Right ventricle myocardium inferior (tissue), 1 donor: ENCODE measurements at regions of chr18 and their contacts with region 1.

Region 1: DNA sequence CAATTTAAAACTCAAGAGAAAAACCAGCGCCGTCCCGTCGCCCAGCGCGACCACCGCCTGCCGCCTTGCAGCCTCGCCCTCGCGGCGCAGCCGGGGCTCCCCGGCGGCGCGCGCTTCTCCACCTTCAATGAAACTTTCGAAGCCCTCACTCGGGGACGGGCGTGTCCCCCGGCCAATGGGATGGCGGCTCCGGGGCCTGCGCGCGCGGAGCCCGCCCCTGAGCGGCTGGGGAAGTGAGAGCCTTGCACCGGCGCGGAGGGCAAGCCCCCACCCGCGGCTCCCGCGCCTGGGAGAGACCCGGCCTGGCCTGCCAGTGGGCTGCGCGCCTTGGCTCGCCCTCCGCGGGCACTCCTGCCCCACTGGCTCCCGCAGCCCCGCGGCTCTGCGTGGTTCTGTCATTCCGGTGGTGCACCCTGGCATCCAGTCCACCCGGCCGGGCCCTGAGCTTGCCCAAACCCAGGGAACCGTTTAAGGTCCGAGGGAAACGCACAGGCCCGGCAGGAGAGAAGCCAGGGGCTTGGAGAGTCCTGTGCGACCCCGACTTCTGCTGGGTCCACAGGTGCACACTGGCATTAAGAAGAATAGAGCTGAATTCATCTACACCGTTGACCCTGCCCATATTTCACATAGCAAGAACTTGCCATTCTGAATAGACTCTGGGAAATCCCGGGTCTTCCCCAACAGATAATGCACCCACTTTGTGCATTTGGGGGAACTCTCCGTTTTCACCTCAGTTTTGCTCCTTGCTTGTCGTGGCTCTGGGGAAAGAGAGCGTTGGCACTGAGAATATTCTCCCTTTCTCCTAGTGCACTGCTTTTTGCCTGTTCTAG is at the start of gene PIEZO2:
- DNase-seq: peak; percentile 72
- ATAC-seq: peak; percentile 39
- total RNA-seq, gene PIEZO2: 0.11 TPM

Region 2: DNA sequence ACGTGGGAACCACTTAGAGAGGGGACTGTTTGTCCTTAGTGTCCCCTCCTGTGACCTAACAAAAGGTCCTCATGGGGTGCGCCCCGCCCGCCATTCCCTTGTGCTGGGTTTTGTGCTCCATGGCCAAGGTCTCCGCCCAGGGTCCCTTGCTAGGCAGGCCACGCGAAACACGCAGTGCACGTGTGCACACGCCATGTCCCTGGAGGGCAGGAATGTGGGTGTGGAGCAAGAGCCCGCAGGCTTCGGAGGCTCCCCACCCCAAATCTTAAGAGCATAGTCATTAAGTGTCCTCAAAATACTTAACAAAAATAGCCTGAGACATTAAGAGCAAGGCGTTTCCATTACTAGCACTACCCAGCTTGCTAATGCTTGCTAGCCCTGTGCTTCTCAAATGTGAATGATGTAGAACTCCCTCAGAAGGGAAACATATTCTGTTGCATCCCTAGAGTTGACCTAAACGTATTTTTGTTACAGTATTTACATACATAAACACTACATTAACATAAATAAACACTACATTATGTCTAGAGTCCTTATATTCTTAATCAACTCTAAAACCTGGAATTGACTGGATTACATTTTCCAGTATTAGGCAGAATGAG is 812.8 kb before region 1 on chr18:
- intact Hi-C with region 1: no loop called
- DNase-seq: no peak
- ATAC-seq: no peak

Region 3: GRCh38 chr18:10560450-10561045 is 589.1 kb before region 1 on chr18:
- intact Hi-C with region 1: loop called (anchors 10 kb)
- DNase-seq: peak; percentile 65
- ATAC-seq: peak; percentile 76

Region 4: GRCh38 chr18:10798727-10799308 is 350.8 kb before region 1 on chr18:
- intact Hi-C with region 1: loop called (anchors 5 kb)
- DNase-seq: no peak
- ATAC-seq: peak; percentile 23

Region 5: GRCh38 chr18:10851824-10852319 is 297.8 kb before region 1 on chr18:
- intact Hi-C with region 1: loop called (anchors 2 kb)
- DNase-seq: no peak
- ATAC-seq: no peak